ENCODE measurements at regions of chr11 and their contacts with region 1.

Region 1: DNA sequence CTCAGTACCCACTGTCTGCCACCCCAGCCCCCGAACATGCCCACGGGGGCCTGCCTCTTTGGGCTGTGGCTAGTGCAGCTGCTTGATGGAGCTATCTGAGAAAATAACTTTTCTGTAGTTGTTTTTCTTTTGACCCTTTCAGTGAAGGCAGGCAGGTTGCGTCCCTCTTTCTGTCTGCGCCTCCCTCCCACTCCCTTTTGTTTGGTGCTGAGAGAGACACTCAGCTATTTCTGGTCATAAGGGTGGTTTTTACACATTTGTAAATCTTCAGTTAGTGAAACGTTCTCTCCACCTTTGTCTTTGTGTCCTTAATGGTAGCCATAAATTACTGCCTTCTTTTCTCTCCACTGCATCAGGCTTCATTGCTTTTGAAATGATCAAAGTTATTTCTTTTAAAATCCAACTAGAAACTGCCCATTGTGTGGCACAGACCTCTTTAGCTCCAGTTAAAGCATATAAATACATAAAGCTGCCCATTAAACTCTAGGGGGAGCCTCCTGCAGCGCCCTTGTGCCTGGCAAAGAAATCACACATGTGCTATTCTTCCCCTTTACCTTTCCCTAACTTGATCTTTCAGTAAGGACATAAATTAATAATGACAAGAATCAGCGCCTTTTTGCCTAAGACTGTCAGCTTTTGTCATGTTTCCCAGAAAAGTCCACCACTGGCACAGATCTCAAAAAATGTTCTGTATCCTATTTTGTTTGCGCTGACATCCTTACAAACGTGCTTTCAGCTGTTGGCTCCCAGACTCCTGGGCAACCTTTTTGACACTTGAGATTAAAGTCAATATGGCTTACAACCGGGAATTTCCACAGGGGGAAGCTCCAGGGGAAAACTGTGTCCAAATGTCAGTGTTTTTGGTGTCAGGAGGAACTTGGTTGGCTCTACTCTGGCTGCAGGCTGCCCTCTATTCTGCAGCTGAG is 1.7 kb upstream of the SCUBE2 start:
- DNase-seq: no peak
- H3K4me3 ChIP-seq: no peak overlapping the region
- H3K27ac ChIP-seq: no peak overlapping the region
- H3K4me1 ChIP-seq: peaks cover 7% of the 10 kb centered on the region
- H3K27me3 ChIP-seq: no peaks in the 10 kb centered on the region
- CTCF ChIP-seq: peak in 1 of 2 donors; percentile 28

Region 2: DNA sequence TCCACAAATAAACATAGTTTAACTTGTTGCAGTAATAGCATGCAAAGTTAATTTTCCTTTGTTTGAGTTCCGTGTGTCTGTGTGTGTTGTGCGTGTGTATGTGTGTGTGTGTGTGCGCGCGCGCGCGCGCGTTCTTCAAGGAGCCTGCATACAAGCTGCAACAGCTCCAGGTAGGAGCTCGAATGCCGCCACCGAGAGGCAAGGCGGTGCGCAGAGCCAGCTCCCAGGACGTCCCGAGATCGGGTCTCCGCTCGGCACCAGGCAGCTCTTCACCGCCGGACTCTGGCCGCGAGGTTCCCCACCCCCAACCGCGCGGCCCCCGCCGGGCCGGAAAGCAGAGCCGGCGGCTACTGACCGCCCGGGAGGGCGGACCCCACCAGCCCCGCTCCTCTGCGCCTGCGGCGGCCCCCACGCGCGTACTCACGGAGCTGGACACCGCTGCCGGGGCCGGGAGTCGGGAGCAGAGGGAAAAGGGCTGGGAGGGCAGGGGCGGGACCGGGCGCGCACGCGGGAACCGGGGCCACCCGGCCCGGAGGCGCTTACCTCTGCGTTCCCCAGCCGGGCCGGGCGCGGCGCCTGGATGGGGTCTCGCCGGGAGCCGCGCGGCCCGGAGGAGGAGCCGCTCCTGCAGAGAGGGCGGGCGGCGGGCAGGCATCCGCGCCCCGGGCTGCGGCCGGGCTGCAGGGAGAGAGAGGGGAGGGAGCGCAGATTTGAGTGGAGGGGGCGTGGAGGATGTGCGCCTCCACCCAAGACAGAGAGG is 222.5 kb before region 1 on chr11:
- CTCF ChIA-PET with region 1: no interaction called
- dilution Hi-C with region 1: no loop called
- in situ Hi-C with region 1: no loop called
- intact Hi-C with region 1: no loop called
- DNase-seq: peak; percentile 74
- H3K4me3 ChIP-seq: peak overlapping the region; percentile 49 to 78 (median 76)
- H3K27ac ChIP-seq: peak overlapping the region; percentile 6
- H3K4me1 ChIP-seq: peaks cover 13% of the 10 kb centered on the region
- H3K27me3 ChIP-seq: no peaks in the 10 kb centered on the region
- CTCF ChIP-seq: peak in 1 of 2 donors; percentile 16

Region 3: DNA sequence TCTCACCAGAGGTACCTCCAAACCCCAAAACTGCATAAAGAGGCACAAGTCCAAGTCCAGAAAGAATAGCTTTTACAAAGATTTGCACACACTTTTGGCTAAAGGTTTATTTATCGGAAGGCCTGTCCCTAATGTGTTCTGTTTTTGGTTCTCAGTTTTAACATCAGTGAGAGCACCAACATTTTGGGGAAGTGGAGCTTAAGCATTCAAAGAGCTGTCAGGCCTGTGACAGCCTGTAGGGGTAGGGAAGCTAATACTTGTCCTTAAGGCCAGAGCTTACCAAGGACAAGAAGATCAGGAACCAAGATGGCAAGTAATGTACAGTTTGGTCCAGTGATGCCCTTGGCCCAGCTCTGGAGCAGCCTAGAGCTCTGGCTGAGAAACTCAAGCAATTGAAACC is 37.2 kb after region 1 on chr11:
- CTCF ChIA-PET with region 1: no interaction called
- dilution Hi-C with region 1: loop called (anchors 5 kb)
- in situ Hi-C with region 1: no loop called
- intact Hi-C with region 1: loop called (anchors 5 kb)
- DNase-seq: no peak
- H3K4me3 ChIP-seq: no peak overlapping the region
- H3K27ac ChIP-seq: no peak overlapping the region
- H3K4me1 ChIP-seq: no peaks in the 10 kb centered on the region
- H3K27me3 ChIP-seq: no peaks in the 10 kb centered on the region
- CTCF ChIP-seq: no peak

Region 4: GRCh38 chr11:9330387-9331384 is 237.6 kb after region 1 on chr11:
- CTCF ChIA-PET with region 1: no interaction called
- dilution Hi-C with region 1: no loop called
- in situ Hi-C with region 1: no loop called
- intact Hi-C with region 1: no loop called
- DNase-seq: peak; percentile 71
- H3K4me3 ChIP-seq: no peak overlapping the region
- H3K27ac ChIP-seq: no peak overlapping the region
- H3K4me1 ChIP-seq: no peaks in the 10 kb centered on the region
- H3K27me3 ChIP-seq: no peaks in the 10 kb centered on the region
- CTCF ChIP-seq: no peak

Measured in mammary epithelial cell (primary cell).